SK-N-SH (cell line): ENCODE measurements at regions of chr2 and their contacts with region 1.

Region 1: DNA sequence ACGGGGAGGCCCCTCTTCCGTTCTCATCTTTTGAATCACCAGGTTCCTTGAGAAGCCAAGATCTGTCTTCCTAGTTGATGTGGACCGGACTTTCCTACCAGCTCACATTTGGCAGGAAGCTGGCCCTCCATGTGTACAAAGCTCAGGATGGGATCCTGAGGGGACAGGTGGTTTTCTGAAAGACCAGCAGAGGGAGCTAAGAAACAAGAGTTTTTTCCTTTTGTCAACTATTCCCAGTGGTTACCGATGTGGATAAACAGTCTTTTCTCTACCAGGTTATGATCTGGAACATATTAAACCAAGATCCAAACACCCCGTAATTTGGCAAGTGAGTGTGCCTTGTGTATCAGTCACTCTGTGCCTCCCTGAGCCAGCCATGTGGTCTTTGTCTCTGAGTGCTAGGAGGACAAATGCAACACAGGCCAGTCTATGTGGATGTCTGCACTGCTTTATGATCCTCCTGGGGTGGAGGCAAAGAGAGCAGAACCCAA is 25.1 kb upstream of the ARHGAP25 start:
- DNase-seq: peak; percentile 52
- H3K4me3 ChIP-seq: no peak overlapping the region
- H3K27ac ChIP-seq: peak overlapping the region in 1 of 2 experiments; percentile 53; a peak in 2 of 4 replicates
- H3K4me1 ChIP-seq: peaks cover 5 to 6% of the 10 kb centered on the region in 2 experiments; a peak in 3 of 4 replicates
- H3K27me3 ChIP-seq: peaks cover 9% of the 10 kb centered on the region; the same call in 1 of the 2 replicates
- CTCF ChIP-seq: peak; percentile 76
- EP300 ChIP-seq: no peak
- RAD21 ChIP-seq: peak; percentile 72

Region 2: DNA sequence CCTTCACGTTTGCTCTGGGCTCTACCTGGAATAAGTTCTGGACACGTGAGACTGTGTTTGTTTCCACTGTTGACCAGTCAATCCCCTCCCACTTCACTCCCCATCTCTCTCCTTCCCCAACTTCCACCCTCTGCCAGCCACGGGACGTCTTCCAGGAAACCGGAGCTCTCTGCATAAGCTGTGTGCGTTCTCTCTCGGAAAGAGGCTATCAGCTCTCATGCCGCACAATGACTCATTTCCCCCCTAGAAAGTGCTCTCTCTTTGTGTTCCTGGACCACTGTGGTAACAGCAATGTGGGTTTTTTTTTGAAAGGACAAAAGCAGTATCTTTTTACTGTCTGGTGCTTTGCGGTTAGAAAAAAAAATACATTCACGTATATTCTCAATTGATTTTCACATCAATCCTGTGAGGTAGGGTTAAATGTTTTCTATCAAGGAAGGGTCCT is 55.9 kb before region 1 on chr2:
- CTCF ChIA-PET with region 1: no interaction called
- POLR2A ChIA-PET with region 1: no interaction called
- DNase-seq: no peak
- H3K4me3 ChIP-seq: no peak overlapping the region
- H3K27ac ChIP-seq: peak overlapping the region in 1 of 2 experiments; percentile 5; a peak in 1 of 4 replicates
- H3K4me1 ChIP-seq: peaks cover 8 to 14% of the 10 kb centered on the region in 2 experiments; a peak in 2 of 4 replicates
- H3K27me3 ChIP-seq: peaks cover 6% of the 10 kb centered on the region; the same call in 1 of the 2 replicates
- CTCF ChIP-seq: no peak
- EP300 ChIP-seq: no peak
- RAD21 ChIP-seq: no peak

Region 3: GRCh38 chr2:68689553-68690537 is 19.6 kb before region 1 on chr2:
- CTCF ChIA-PET with region 1: interaction called, 14 read pairs
- POLR2A ChIA-PET with region 1: no interaction called
- DNase-seq: no peak
- H3K4me3 ChIP-seq: no peak overlapping the region
- H3K27ac ChIP-seq: no peak overlapping the region
- H3K4me1 ChIP-seq: peaks cover 0 to 5% of the 10 kb centered on the region in 2 experiments; a peak in 3 of 4 replicates
- H3K27me3 ChIP-seq: no peaks in the 10 kb centered on the region
- CTCF ChIP-seq: no peak
- EP300 ChIP-seq: no peak
- RAD21 ChIP-seq: no peak

Region 4: GRCh38 chr2:68721482-68722101 is 12.1 kb after region 1 on chr2:
- CTCF ChIA-PET with region 1: interaction called, 17 read pairs
- POLR2A ChIA-PET with region 1: no interaction called
- DNase-seq: no peak
- H3K4me3 ChIP-seq: no peak overlapping the region
- H3K27ac ChIP-seq: no peak overlapping the region
- H3K4me1 ChIP-seq: peaks cover 0 to 4% of the 10 kb centered on the region in 2 experiments; a peak in 1 of 4 replicates
- H3K27me3 ChIP-seq: no peaks in the 10 kb centered on the region
- CTCF ChIP-seq: no peak
- EP300 ChIP-seq: no peak
- RAD21 ChIP-seq: no peak

Region 5: DNA sequence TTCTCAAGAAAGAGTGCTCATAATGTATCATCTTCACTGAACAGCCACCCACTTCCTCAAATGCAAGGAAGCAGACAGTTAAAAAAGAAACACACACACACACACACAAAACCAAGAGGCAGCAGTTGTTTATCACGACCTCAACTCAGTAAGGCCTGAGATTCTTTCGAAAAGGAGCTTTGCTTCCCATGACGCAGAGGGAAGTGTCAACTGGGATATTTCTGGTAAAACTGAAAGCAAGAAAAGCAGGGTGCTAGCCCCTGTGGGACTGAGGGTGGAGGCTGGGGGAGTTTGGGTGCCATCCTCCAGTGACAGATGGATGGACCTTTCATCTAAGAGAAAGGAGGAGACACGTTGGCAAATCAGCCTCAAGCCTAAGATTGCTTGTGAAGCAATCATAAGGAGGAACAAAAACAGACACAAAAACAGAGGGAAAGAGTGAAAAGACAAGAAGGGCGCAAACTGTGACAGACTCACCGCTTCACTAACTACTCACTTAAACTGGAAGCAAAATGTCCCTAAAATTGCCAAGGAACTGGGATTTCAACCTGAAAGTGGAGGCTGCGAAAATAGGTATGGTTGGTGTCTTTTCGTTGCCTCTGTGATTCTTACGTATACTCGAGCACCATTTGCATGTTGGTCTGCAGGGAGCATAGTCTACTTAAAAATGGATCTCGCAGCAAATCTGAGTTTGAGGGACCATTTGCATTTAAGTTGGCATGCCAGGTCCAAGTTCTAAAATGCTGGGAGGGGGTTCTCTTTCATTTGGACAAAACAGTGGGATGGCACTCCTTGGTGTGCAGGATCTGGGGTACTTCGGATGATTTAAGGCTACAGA is 25.4 kb after region 1 on chr2 and contains the start of gene ARHGAP25:
- CTCF ChIA-PET with region 1: interaction called, 10 read pairs
- POLR2A ChIA-PET with region 1: no interaction called
- DNase-seq: no peak
- H3K4me3 ChIP-seq: no peak within 1 kb of the TSS
- H3K27ac ChIP-seq: no peak within 1 kb of the TSS
- H3K4me1 ChIP-seq: no peaks in the 10 kb centered on the region
- H3K27me3 ChIP-seq: no peaks in the 10 kb centered on the region
- CTCF ChIP-seq: no peak
- EP300 ChIP-seq: no peak
- RAD21 ChIP-seq: no peak
- polyA plus RNA-seq, gene ARHGAP25: not detected in 2 replicates

Region 6: DNA sequence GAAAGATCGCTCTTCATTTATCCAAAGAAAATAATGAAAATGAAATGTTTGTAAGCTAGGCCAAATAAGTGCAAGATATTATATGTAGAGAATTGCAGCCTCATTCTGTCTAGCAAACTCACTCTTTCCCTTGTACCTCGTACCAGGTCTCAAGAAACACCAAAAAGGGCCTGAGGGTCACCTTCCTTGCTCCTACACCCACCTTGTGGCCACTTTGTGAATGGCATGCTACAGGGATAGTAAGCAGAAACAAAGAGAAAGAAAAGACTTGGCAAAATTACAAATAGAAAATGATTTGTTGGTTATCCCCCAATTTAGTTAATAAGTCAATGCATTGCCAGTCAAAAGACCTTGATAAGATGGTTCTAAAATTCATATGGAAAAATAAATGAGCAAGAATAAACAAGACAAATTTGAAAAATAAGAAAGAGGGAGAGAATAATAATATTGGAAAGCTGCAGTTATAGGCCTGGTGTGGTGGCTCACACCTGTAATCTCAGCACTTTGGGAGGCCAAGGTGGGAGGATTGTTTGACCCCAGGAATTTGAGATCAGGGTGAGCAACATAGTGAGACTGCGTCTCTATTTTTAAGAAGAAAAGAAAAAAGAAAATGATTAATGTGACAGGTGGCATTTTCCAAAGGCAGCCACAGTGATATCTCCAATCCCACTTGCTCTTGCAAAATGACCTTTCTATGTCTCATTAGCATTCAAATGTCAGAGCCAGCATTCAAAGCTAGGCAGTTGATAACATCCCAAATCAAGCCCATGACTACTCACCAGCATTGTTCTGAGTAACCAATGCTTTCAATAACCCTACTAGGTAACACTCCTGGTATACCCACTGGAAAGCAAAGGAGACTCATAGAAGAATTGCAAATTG is 200.6 kb after region 1 on chr2:
- CTCF ChIA-PET with region 1: interaction called, 14 read pairs
- POLR2A ChIA-PET with region 1: no interaction called
- DNase-seq: peak; percentile 70
- H3K4me3 ChIP-seq: peak overlapping the region in 1 of 2 experiments; percentile 6; a peak in 1 of 4 replicates
- H3K27ac ChIP-seq: no peak overlapping the region
- H3K4me1 ChIP-seq: peaks cover 0 to 8% of the 10 kb centered on the region in 2 experiments; a peak in 2 of 4 replicates
- H3K27me3 ChIP-seq: no peaks in the 10 kb centered on the region
- CTCF ChIP-seq: peak; percentile 92
- EP300 ChIP-seq: no peak
- RAD21 ChIP-seq: peak; percentile 96

Region 7: GRCh38 chr2:69773206-69773767 is 1063.8 kb after region 1 on chr2:
- CTCF ChIA-PET with region 1: no interaction called
- POLR2A ChIA-PET with region 1: no interaction called
- DNase-seq: no peak
- H3K4me3 ChIP-seq: no peak overlapping the region
- H3K27ac ChIP-seq: peak overlapping the region in 1 of 2 experiments; percentile 51; a peak in 1 of 4 replicates
- H3K4me1 ChIP-seq: peaks cover 0 to 23% of the 10 kb centered on the region in 2 experiments; a peak in 1 of 4 replicates
- H3K27me3 ChIP-seq: no peaks in the 10 kb centered on the region
- CTCF ChIP-seq: no peak
- EP300 ChIP-seq: no peak
- RAD21 ChIP-seq: no peak